ENCODE measurements at regions of chr12 and their contacts with region 1.

Region 1: GRCh38 chr12:121712461-121713256 is at the start of gene TMEM120B:
- DNase-seq: peak; percentile 87 to 91
- ATAC-seq: peak; percentile 93 to 97 (median 95)
- H3K4me3 ChIP-seq: peak within 1 kb of the TSS; percentile 86
- H3K4me3 Mint-ChIP-seq: peak within 1 kb of the TSS; percentile 90
- H3K27ac ChIP-seq: peak within 1 kb of the TSS; percentile 73
- H3K27ac Mint-ChIP-seq: peak within 1 kb of the TSS; percentile 86 to 95
- H3K4me1 ChIP-seq: peaks cover 21% of the 10 kb centered on the region
- H3K4me1 Mint-ChIP-seq: peaks cover 12 to 19% of the 10 kb centered on the region in 2 donors
- H3K27me3 ChIP-seq: no peaks in the 10 kb centered on the region
- H3K27me3 Mint-ChIP-seq: no peaks in the 10 kb centered on the region
- CTCF ChIP-seq: no peak
- total RNA-seq, gene TMEM120B: 6.3 to 8.4 (median 7.9) TPM

Region 2: GRCh38 chr12:121688966-121689365 is 23.7 kb before region 1 on chr12:
- intact Hi-C with region 1: loop called (anchors 2 kb)
- DNase-seq: no peak
- ATAC-seq: no peak
- H3K4me3 ChIP-seq: no peak overlapping the region
- H3K4me3 Mint-ChIP-seq: no peak overlapping the region
- H3K27ac ChIP-seq: no peak overlapping the region
- H3K27ac Mint-ChIP-seq: peak overlapping the region in 1 of 2 donors; percentile 18
- H3K4me1 ChIP-seq: peaks cover 10% of the 10 kb centered on the region
- H3K4me1 Mint-ChIP-seq: peaks cover 5 to 6% of the 10 kb centered on the region in 2 donors
- H3K27me3 ChIP-seq: no peaks in the 10 kb centered on the region
- H3K27me3 Mint-ChIP-seq: no peaks in the 10 kb centered on the region
- CTCF ChIP-seq: no peak